Esophagus muscularis mucosa (tissue), 4 donors: ENCODE measurements at regions of chr1 and their contacts with region 1.

Region 1: GRCh38 chr1:25695090-25695770 is 78.6 kb downstream of the MAN1C1 start:
- DNase-seq: peak; percentile 95
- H3K4me3 ChIP-seq: peak overlapping the region in 1 of 4 donors; percentile 2
- H3K27ac ChIP-seq: peak overlapping the region; percentile 84 to 92 (median 90)
- H3K4me1 ChIP-seq: peaks cover 61 to 81% (median 75%) of the 10 kb centered on the region in 4 donors
- H3K27me3 ChIP-seq: no peaks in the 10 kb centered on the region
- CTCF ChIP-seq: peak; percentile 18 to 34 (median 27)
- EP300 ChIP-seq: peak; percentile 79
- POLR2A ChIP-seq: no peak

Region 2: GRCh38 chr1:25616095-25616986 is 78.9 kb before region 1 on chr1 and contains the start of gene MAN1C1:
- intact Hi-C with region 1: loop called (anchors 2 kb)
- DNase-seq: peak; percentile 96
- H3K4me3 ChIP-seq: peak within 1 kb of the TSS; percentile 71 to 98 (median 96)
- H3K27ac ChIP-seq: peak within 1 kb of the TSS; percentile 86 to 90 (median 89)
- H3K4me1 ChIP-seq: peaks cover 40 to 54% (median 51%) of the 10 kb centered on the region in 4 donors
- H3K27me3 ChIP-seq: no peaks in the 10 kb centered on the region
- CTCF ChIP-seq: peak; percentile 44 to 66 (median 58)
- EP300 ChIP-seq: no peak
- POLR2A ChIP-seq: no peak
- total RNA-seq, gene MAN1C1: 20.2 to 22.8 (median 20.7) TPM

Region 3: DNA sequence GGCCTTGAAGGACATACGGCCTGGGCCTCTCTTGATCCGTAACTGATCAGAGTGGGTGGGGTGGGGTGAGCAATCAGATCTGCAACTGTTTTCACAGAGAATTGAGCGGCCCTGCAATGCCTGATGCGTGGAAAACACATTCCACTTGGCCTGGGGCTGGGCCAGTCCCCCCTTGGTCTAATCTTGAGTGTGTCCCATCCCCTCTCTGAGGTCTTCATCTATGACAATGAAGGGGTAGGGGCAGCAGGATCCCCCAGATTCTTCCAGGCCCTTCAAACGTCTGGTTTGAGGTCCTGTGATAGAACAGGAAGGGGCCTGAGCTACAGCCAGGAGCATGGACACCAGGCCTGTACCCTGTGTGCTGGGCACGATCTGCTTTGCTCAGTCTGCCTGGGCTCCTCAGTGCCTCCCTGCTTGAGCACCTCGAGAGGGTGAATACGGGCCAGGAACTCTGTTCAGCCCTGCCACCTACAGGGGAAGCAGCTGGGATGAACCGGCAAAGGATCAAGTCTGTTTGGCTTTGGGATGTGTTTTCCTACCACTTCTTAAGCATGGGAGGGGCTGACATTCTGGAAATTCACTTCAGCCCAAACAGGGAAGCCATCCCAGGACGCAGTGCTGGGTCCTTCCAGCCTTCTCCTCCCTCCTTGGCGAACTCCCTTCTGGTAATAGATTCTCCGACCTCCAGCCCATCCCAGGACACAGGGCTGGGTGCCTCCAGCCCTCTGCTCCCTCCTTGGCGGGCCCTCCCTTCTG is 48.8 kb after region 1 on chr1:
- intact Hi-C with region 1: loop called (anchors 5 kb)
- DNase-seq: peak; percentile 93
- H3K4me3 ChIP-seq: no peak overlapping the region
- H3K27ac ChIP-seq: peak overlapping the region; percentile 87 to 94 (median 88)
- H3K4me1 ChIP-seq: peaks cover 29 to 60% (median 45%) of the 10 kb centered on the region in 4 donors
- H3K27me3 ChIP-seq: no peaks in the 10 kb centered on the region
- CTCF ChIP-seq: peak; percentile 65 to 70 (median 65)
- EP300 ChIP-seq: no peak
- POLR2A ChIP-seq: no peak